ENCODE measurements at regions of chr17 and their contacts with region 1.

Region 1: GRCh38 chr17:58156839-58157803 is 8.9 kb downstream of the OR4D1 start:
- DNase-seq: peak; percentile 54 to 67 (median 58)
- H3K4me3 ChIP-seq: peak overlapping the region; percentile 55 to 63
- H3K4me3 Mint-ChIP-seq: peak overlapping the region; percentile 87 to 98 (median 92)
- H3K27ac ChIP-seq: peak overlapping the region; percentile 68
- H3K27ac Mint-ChIP-seq: peak overlapping the region; percentile 90 to 99 (median 97)
- H3K4me1 ChIP-seq: peaks cover 63% of the 10 kb centered on the region
- H3K4me1 Mint-ChIP-seq: peaks cover 49 to 82% (median 68%) of the 10 kb centered on the region in 4 donors
- H3K27me3 ChIP-seq: no peaks in the 10 kb centered on the region
- H3K27me3 Mint-ChIP-seq: no peaks in the 10 kb centered on the region

Region 2: GRCh38 chr17:58121925-58122324 is 35.2 kb before region 1 on chr17:
- CTCF ChIA-PET with region 1: interaction called, 20 read pairs
- POLR2A ChIA-PET with region 1: interaction called, 16 read pairs
- intact Hi-C with region 1: loop called (anchors 1 kb)
- DNase-seq: peak; percentile 51 to 68 (median 65)
- H3K4me3 ChIP-seq: no peak overlapping the region
- H3K4me3 Mint-ChIP-seq: peak overlapping the region in 1 of 8 donors; percentile 61
- H3K27ac ChIP-seq: no peak overlapping the region
- H3K27ac Mint-ChIP-seq: peak overlapping the region in 1 of 7 donors; percentile 22
- H3K4me1 ChIP-seq: peaks cover 8% of the 10 kb centered on the region
- H3K4me1 Mint-ChIP-seq: peaks cover 9 to 18% (median 15%) of the 10 kb centered on the region in 4 donors
- H3K27me3 ChIP-seq: no peaks in the 10 kb centered on the region
- H3K27me3 Mint-ChIP-seq: peaks cover 5 to 11% of the 10 kb centered on the region in 2 donors

Region 3: DNA sequence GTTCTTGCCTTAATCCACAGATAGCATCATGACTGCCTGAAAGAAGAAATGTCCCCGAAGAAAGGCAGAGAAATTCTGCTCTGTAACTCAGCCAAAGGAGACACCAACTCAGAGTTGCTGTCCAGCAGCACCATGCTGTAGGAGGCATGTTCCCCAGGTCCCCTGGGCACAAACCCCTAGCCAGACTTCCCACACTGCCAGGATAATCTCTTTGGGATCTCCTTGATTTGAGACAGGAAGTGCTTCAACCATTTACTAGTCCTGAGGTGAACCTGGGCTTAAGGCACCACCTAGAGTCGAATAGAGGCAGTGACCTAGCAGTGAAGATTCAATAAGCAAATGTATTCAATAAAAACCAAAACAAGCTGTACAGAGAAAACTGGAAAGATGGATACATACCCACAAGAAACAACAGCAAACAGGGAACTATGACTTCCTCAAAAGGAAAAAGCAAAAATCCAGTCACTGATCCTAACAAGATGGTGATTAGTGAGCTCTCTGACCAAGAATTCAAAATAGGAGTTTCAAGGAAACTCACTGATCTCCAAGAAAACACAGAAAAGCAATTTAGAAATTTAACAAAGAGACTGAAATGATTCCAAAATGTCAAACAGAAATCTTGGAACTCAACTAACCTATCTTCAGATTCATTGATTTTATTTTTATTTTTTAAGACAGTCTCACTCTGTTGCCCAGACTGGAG is 15.4 kb after region 1 on chr17:
- CTCF ChIA-PET with region 1: interaction called, 105 read pairs
- POLR2A ChIA-PET with region 1: interaction called, 151 read pairs
- intact Hi-C with region 1: loop called (anchors 2 kb)
- DNase-seq: peak; percentile 62 to 72 (median 66)
- H3K4me3 ChIP-seq: no peak overlapping the region
- H3K4me3 Mint-ChIP-seq: peak overlapping the region; percentile 16 to 69 (median 51)
- H3K27ac ChIP-seq: no peak overlapping the region
- H3K27ac Mint-ChIP-seq: peak overlapping the region in 6 of 7 donors; percentile 15 to 92 (median 89)
- H3K4me1 ChIP-seq: peaks cover 47% of the 10 kb centered on the region
- H3K4me1 Mint-ChIP-seq: peaks cover 40 to 50% (median 44%) of the 10 kb centered on the region in 4 donors
- H3K27me3 ChIP-seq: no peaks in the 10 kb centered on the region
- H3K27me3 Mint-ChIP-seq: peaks cover under 1% of the 10 kb centered on the region in 2 donors

Region 4: GRCh38 chr17:58219001-58219788 is 62.1 kb after region 1 on chr17 and contains the start of gene MKS1:
- CTCF ChIA-PET with region 1: no interaction called
- POLR2A ChIA-PET with region 1: interaction called, 4 read pairs
- intact Hi-C with region 1: loop called (anchors 2 kb)
- DNase-seq: peak; percentile 94 to 96 (median 95)
- H3K4me3 ChIP-seq: peak within 1 kb of the TSS; percentile 71 to 88
- H3K4me3 Mint-ChIP-seq: peak within 1 kb of the TSS; percentile 91 to 99 (median 94)
- H3K27ac ChIP-seq: peak within 1 kb of the TSS; percentile 54
- H3K27ac Mint-ChIP-seq: peak within 1 kb of the TSS; percentile 94 to 99 (median 97)
- H3K4me1 ChIP-seq: peaks cover 15% of the 10 kb centered on the region
- H3K4me1 Mint-ChIP-seq: peaks cover 19 to 28% (median 23%) of the 10 kb centered on the region in 4 donors
- H3K27me3 ChIP-seq: no peaks in the 10 kb centered on the region
- H3K27me3 Mint-ChIP-seq: peaks cover 0 to 2% of the 10 kb centered on the region in 2 donors
- total RNA-seq, gene MKS1: 27.7 to 29.4 TPM